CD4-positive, alpha-beta T cell (primary cell): ENCODE measurements at regions of chr3 and their contacts with region 1.

Region 1: DNA sequence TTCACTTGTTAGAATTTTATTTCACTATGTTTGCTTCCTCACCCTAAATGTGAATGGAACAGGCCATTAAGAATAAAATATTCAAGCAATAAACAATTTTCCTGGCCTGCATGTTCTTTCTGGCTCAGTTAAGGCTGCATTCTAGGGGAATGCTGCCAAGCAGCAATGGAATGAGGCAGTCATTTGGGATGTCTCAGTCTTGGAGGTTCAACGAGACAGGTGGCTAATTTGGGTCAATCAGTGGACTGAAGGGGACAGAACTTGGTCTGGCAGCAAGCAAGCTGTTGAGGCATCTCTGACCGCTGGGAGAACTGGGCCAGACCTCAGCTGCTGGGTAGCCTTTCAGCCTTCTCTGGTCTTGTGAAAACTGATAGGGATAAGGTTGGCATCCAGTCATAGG is 241.6 kb downstream of the NLGN1 start:
- DNase-seq: no peak
- ATAC-seq: no peak
- H3K4me3 ChIP-seq: no peak overlapping the region
- H3K4me3 Mint-ChIP-seq: no peak overlapping the region
- H3K27ac ChIP-seq: no peak overlapping the region
- H3K27ac Mint-ChIP-seq: no peak overlapping the region
- H3K4me1 ChIP-seq: no peaks in the 10 kb centered on the region
- H3K4me1 Mint-ChIP-seq: no peaks in the 10 kb centered on the region
- H3K27me3 ChIP-seq: no peaks in the 10 kb centered on the region
- H3K27me3 Mint-ChIP-seq: no peaks in the 10 kb centered on the region
- CTCF ChIP-seq: no peak

Region 2: GRCh38 chr3:173586166-173586565 is 52.9 kb before region 1 on chr3:
- CTCF ChIA-PET with region 1: no interaction called
- POLR2A ChIA-PET with region 1: no interaction called
- intact Hi-C with region 1: no loop called
- DNase-seq: no peak
- ATAC-seq: no peak
- H3K4me3 ChIP-seq: no peak overlapping the region
- H3K4me3 Mint-ChIP-seq: no peak overlapping the region
- H3K27ac ChIP-seq: no peak overlapping the region
- H3K27ac Mint-ChIP-seq: no peak overlapping the region
- H3K4me1 ChIP-seq: no peaks in the 10 kb centered on the region
- H3K4me1 Mint-ChIP-seq: peaks cover 10% of the 10 kb centered on the region
- H3K27me3 ChIP-seq: peaks cover 7 to 12% of the 10 kb centered on the region in 2 experiments
- H3K27me3 Mint-ChIP-seq: peaks cover 32% of the 10 kb centered on the region
- CTCF ChIP-seq: no peak

Region 3: DNA sequence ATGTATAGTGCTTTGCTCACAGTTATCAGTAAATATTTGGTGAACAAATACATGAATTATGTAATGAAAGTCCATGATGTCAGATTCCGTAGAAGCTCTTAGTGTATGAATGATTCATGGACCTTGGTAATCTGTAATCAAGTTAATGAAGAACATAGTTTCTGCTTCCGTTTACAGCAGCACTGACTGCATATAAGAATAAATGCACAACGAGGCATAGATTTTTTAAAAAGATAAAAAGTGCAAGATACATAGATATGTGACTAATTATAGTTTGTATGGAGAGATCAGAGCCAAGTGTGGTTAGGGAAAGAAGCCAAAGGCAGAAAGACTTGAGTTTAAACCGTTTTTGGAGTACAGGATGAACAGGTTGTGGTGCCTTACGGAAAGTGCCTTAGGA is 51.4 kb after region 1 on chr3:
- CTCF ChIA-PET with region 1: no interaction called
- POLR2A ChIA-PET with region 1: no interaction called
- intact Hi-C with region 1: loop called in 1 of 2 experiments (anchors 10 kb)
- DNase-seq: no peak
- ATAC-seq: no peak
- H3K4me3 ChIP-seq: no peak overlapping the region
- H3K4me3 Mint-ChIP-seq: no peak overlapping the region
- H3K27ac ChIP-seq: no peak overlapping the region
- H3K27ac Mint-ChIP-seq: no peak overlapping the region
- H3K4me1 ChIP-seq: no peaks in the 10 kb centered on the region
- H3K4me1 Mint-ChIP-seq: no peaks in the 10 kb centered on the region
- H3K27me3 ChIP-seq: no peaks in the 10 kb centered on the region
- H3K27me3 Mint-ChIP-seq: no peaks in the 10 kb centered on the region
- CTCF ChIP-seq: no peak

Region 4: GRCh38 chr3:174408310-174408709 is 769.2 kb after region 1 on chr3:
- CTCF ChIA-PET with region 1: no interaction called
- POLR2A ChIA-PET with region 1: no interaction called
- intact Hi-C with region 1: no loop called
- DNase-seq: no peak
- ATAC-seq: no peak
- H3K4me3 ChIP-seq: no peak overlapping the region
- H3K4me3 Mint-ChIP-seq: no peak overlapping the region
- H3K27ac ChIP-seq: no peak overlapping the region
- H3K27ac Mint-ChIP-seq: no peak overlapping the region
- H3K4me1 ChIP-seq: no peaks in the 10 kb centered on the region
- H3K4me1 Mint-ChIP-seq: no peaks in the 10 kb centered on the region
- H3K27me3 ChIP-seq: no peaks in the 10 kb centered on the region
- H3K27me3 Mint-ChIP-seq: no peaks in the 10 kb centered on the region
- CTCF ChIP-seq: no peak